Activated T-helper 2 cell treated with anti-CD3 and anti-CD28 coated beads, Interferon-gamma antibody, Interleukin-2, Interleukin-4, amounts not matched to agents 10 μg/mL and 5 μg/mL and 100 μg/mL, durations not matched to agents 14 hours and 24 hours and 36 hours (primary cell): ENCODE measurements at regions of chr14 and their contacts with region 1.

Region 1: DNA sequence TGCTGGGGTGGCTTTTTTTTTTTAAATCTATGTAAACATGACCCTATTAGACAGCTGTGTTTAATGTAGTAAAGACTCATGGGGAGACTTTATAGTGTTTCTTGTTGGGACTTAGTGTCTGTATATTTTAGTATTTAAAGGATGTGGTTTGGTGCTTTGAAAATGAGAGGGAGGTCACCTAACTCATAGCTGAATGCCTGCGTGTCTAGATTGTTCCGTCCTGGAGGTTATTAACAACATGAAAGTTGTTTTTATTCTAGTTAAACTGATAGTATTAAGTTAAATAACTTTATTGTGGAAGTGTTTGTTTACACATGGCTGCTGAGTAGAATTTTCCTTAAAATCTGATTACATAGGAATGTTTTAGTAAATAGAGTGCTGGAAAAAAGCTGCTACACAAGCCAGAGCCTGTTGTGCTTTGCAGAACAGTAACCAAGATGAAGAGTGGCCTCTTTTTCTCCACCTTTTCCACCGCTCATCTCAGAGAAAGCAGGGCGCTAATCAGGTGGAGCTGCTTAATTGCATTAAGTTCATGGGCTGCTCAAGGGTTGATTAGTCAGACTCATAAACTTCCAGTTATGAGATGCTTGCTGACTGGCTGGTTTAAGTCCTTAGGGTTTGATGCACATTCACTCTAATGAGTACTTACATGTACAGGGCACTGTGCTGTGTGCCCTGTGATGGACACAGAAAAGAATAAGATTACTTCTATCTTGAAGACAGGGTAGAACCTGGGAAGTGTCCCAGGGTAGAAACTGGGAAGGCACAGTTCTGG is 62.7 kb downstream of the FBXO34 start:
- DNase-seq: no peak
- H3K4me3 Mint-ChIP-seq: peak overlapping the region; percentile 60
- H3K27ac Mint-ChIP-seq: peak overlapping the region; percentile 87
- H3K4me1 Mint-ChIP-seq: peaks cover 71% of the 10 kb centered on the region
- H3K27me3 Mint-ChIP-seq: no peaks in the 10 kb centered on the region

Region 2: GRCh38 chr14:55102141-55102621 is 231.7 kb before region 1 on chr14:
- intact Hi-C with region 1: loop called (anchors 5 kb)
- DNase-seq: peak; percentile 32
- H3K4me3 Mint-ChIP-seq: no peak overlapping the region
- H3K27ac Mint-ChIP-seq: peak overlapping the region; percentile 90
- H3K4me1 Mint-ChIP-seq: peaks cover 45% of the 10 kb centered on the region
- H3K27me3 Mint-ChIP-seq: no peaks in the 10 kb centered on the region

Region 3: GRCh38 chr14:55354500-55354899 is 20.6 kb after region 1 on chr14:
- intact Hi-C with region 1: loop called (anchors 2 kb)
- DNase-seq: peak; percentile 49
- H3K4me3 Mint-ChIP-seq: no peak overlapping the region
- H3K27ac Mint-ChIP-seq: peak overlapping the region; percentile 62
- H3K4me1 Mint-ChIP-seq: peaks cover 28% of the 10 kb centered on the region
- H3K27me3 Mint-ChIP-seq: no peaks in the 10 kb centered on the region

Region 4: DNA sequence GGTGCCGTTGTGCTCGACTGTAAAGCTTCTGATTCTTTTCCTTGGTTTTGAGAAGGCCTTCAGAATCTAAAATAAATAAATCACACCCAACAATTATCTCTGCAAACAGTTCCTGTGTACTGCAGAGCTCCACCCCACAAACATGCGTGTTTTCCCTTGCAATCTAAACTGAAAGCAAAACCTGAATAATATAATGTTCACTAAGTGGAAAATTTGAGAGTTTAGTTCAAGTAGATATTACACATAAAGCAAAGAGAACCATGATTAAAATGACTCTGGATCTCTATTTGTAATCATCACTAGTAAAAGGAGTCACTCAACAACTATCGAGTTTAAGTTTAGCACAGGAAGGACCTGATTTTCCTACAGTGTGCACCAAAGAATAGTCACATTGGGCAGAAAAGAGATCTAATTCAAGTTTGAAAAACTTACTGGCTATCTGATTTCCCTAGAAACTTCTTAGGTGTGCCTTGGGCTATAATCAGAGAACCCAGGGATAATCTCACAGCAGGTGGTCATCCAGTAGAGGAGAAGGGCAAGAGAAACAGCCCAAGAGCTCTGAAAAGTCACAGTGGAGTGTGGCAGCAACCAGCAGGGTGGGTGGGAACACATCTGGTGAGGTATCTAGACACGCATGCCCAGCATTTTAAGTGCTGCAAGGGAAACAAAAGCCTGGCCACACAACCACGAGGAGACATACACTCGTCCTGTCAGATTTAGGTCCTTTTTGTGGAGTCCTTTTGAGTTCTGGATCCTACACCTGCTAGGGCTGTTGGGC is 52.3 kb after region 1 on chr14:
- intact Hi-C with region 1: loop called (anchors 1 kb)
- DNase-seq: no peak
- H3K4me3 Mint-ChIP-seq: peak overlapping the region; percentile 11
- H3K27ac Mint-ChIP-seq: peak overlapping the region; percentile 88
- H3K4me1 Mint-ChIP-seq: peaks cover 44% of the 10 kb centered on the region
- H3K27me3 Mint-ChIP-seq: no peaks in the 10 kb centered on the region